T-cell (primary cell): ENCODE measurements at regions of chr12 and their contacts with region 1.

Region 1: GRCh38 chr12:132416121-132416673 is 73.8 kb upstream of the FBRSL1 start:
- DNase-seq: no peak
- ATAC-seq: no peak
- H3K4me3 ChIP-seq: no peak overlapping the region
- H3K4me3 Mint-ChIP-seq: no peak overlapping the region
- H3K27ac ChIP-seq: no peak overlapping the region
- H3K27ac Mint-ChIP-seq: no peak overlapping the region
- H3K4me1 ChIP-seq: peaks cover 4 to 16% of the 10 kb centered on the region in 2 experiments
- H3K4me1 Mint-ChIP-seq: peaks cover 2 to 7% (median 5%) of the 10 kb centered on the region in 3 donors
- H3K27me3 ChIP-seq: peaks cover 0 to 38% of the 10 kb centered on the region in 2 experiments
- H3K27me3 Mint-ChIP-seq: peaks cover 0 to 2% of the 10 kb centered on the region in 2 donors

Region 2: GRCh38 chr12:132404951-132405741 is 11.1 kb before region 1 on chr12:
- CTCF ChIA-PET with region 1: no interaction called
- POLR2A ChIA-PET with region 1: no interaction called
- DNase-seq: no peak
- ATAC-seq: no peak
- H3K4me3 ChIP-seq: no peak overlapping the region
- H3K4me3 Mint-ChIP-seq: no peak overlapping the region
- H3K27ac ChIP-seq: no peak overlapping the region
- H3K27ac Mint-ChIP-seq: no peak overlapping the region
- H3K4me1 ChIP-seq: no peaks in the 10 kb centered on the region
- H3K4me1 Mint-ChIP-seq: no peaks in the 10 kb centered on the region
- H3K27me3 ChIP-seq: peaks cover 0 to 82% of the 10 kb centered on the region in 2 experiments
- H3K27me3 Mint-ChIP-seq: peaks cover 18 to 20% of the 10 kb centered on the region in 2 donors

Region 3: GRCh38 chr12:132453361-132454192 is 37.4 kb after region 1 on chr12:
- CTCF ChIA-PET with region 1: no interaction called
- POLR2A ChIA-PET with region 1: interaction called in 1 of 2 experiments, 10 read pairs
- DNase-seq: no peak
- ATAC-seq: no peak
- H3K4me3 ChIP-seq: no peak overlapping the region
- H3K4me3 Mint-ChIP-seq: no peak overlapping the region
- H3K27ac ChIP-seq: no peak overlapping the region
- H3K27ac Mint-ChIP-seq: no peak overlapping the region
- H3K4me1 ChIP-seq: peaks cover 15 to 53% of the 10 kb centered on the region in 2 experiments
- H3K4me1 Mint-ChIP-seq: peaks cover 18 to 27% (median 26%) of the 10 kb centered on the region in 3 donors
- H3K27me3 ChIP-seq: peaks cover 0 to 34% of the 10 kb centered on the region in 2 experiments
- H3K27me3 Mint-ChIP-seq: peaks cover 0 to 7% of the 10 kb centered on the region in 2 donors

Region 4: GRCh38 chr12:132492522-132492921 is 76.3 kb after region 1 on chr12:
- CTCF ChIA-PET with region 1: no interaction called
- POLR2A ChIA-PET with region 1: no interaction called
- DNase-seq: no peak
- ATAC-seq: no peak
- H3K4me3 ChIP-seq: peak overlapping the region; percentile 47 to 85
- H3K4me3 Mint-ChIP-seq: peak overlapping the region; percentile 82 to 94 (median 88)
- H3K27ac ChIP-seq: no peak overlapping the region
- H3K27ac Mint-ChIP-seq: peak overlapping the region; percentile 26 to 47
- H3K4me1 ChIP-seq: peaks cover 16 to 85% of the 10 kb centered on the region in 2 experiments
- H3K4me1 Mint-ChIP-seq: peaks cover 69 to 74% (median 73%) of the 10 kb centered on the region in 3 donors
- H3K27me3 ChIP-seq: peaks cover 0 to 2% of the 10 kb centered on the region in 2 experiments
- H3K27me3 Mint-ChIP-seq: no peaks in the 10 kb centered on the region